HAP-1 (cell line): ENCODE measurements at regions of chr10 and their contacts with region 1.

Region 1: GRCh38 chr10:71314028-71314693 is 4.9 kb upstream of the SLC29A3 start:
- DNase-seq: peak; percentile 63 to 74
- H3K4me3 ChIP-seq: no peak overlapping the region
- H3K4me1 ChIP-seq: no peaks in the 10 kb centered on the region; the same call in 1 of the 2 replicates
- H3K27me3 ChIP-seq: peaks cover 14% of the 10 kb centered on the region

Region 2: GRCh38 chr10:69612760-69613159 is 1701.4 kb before region 1 on chr10:
- in situ Hi-C with region 1: no loop called
- DNase-seq: no peak
- H3K4me3 ChIP-seq: no peak overlapping the region
- H3K4me1 ChIP-seq: no peaks in the 10 kb centered on the region
- H3K27me3 ChIP-seq: no peaks in the 10 kb centered on the region

Region 3: GRCh38 chr10:71064413-71065118 is 249.6 kb before region 1 on chr10:
- in situ Hi-C with region 1: no loop called
- DNase-seq: no peak
- H3K4me3 ChIP-seq: no peak overlapping the region
- H3K4me1 ChIP-seq: no peaks in the 10 kb centered on the region
- H3K27me3 ChIP-seq: no peaks in the 10 kb centered on the region

Region 4: DNA sequence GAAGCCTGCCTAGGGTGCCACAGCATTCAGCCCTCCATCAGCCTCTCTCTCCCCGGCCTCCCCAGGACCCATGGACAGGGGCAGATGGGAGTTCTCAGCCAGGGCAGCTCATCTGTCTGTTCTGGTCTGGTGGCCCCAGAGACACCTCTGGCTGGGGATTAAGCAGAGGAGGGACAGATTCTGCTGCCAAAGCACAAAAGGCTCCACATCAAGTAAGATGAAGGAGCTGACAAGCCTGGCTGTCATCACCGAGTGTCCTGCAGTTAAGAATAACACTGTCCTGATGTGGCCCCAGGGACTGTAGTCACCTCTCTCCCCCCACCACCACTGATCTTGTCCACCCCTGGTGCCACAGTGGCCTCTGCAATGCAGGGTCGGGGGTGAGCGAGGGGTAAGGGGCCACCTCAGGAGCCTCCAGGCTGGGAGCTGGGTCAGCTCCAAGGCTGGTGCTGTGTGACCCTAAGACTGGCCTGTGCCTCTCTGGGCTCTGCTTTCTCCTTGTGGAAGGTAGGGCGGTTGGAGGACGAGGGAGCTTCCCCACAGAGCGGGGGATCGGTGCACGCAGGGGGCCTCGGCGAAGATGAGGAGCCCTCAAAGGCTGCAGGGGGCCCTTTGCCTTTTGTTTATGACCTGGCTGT is 386.7 kb after region 1 on chr10:
- in situ Hi-C with region 1: loop called (anchors 5 kb)
- DNase-seq: no peak
- H3K4me3 ChIP-seq: no peak overlapping the region
- H3K4me1 ChIP-seq: no peaks in the 10 kb centered on the region
- H3K27me3 ChIP-seq: no peaks in the 10 kb centered on the region